AG04449 (cell line): ENCODE measurements at regions of chr11 and their contacts with region 1.

Region 1: DNA sequence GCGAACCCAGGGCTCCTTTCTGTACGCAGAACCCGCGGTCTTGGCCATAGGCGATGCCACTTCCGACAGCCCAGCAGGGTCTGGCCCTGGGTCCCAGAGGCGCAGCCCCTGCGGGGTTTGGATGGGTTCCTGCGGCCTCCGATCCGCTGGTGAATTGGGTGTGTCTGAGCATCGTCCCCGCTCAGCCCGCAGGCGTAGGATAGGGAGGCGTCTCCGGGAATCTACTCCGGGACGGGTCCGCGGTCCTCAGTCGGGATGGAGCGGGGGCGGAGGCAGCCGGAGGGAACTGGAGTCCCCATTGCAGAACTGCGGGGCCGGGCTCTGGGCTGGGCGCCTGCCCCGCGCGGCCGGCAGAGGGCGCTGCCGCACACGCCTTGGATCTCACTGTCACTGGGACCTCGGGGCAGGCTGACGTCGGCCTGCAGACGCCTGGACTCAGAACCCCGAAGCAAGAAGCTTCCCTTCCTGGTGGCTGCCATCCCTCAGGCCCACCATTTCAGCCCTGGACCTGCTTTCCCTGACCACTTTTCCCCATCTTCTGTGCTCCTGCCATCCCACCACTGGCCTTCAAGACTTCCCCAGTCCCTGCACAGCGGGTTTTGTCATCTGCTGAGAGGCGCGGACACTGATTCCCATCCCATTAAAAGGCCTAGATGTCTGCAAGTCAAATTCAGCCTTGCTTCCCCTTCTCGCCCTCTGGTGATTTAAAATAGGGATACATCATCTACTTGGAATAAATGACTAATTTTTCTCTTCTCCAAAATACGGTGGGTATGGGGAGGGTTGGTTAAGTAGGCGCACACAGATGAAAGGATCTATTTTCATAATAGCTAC is 38.3 kb upstream of the CREB3L1 start:
- DNase-seq: no peak
- H3K4me3 ChIP-seq: peak overlapping the region; percentile 53
- CTCF ChIP-seq: peak; percentile 90

Region 2: GRCh38 chr11:46278387-46279125 is 39.4 kb after region 1 on chr11:
- CTCF ChIA-PET with region 1: interaction called, 72 read pairs
- POLR2A ChIA-PET with region 1: interaction called, 40 read pairs
- DNase-seq: no peak
- H3K4me3 ChIP-seq: peak overlapping the region; percentile 95
- CTCF ChIP-seq: peak; percentile 90

Region 3: GRCh38 chr11:46308631-46309419 is 69.6 kb after region 1 on chr11:
- CTCF ChIA-PET with region 1: interaction called, 661 read pairs
- POLR2A ChIA-PET with region 1: interaction called, 4 read pairs
- DNase-seq: no peak
- H3K4me3 ChIP-seq: no peak overlapping the region
- CTCF ChIP-seq: peak; percentile 86

Region 4: DNA sequence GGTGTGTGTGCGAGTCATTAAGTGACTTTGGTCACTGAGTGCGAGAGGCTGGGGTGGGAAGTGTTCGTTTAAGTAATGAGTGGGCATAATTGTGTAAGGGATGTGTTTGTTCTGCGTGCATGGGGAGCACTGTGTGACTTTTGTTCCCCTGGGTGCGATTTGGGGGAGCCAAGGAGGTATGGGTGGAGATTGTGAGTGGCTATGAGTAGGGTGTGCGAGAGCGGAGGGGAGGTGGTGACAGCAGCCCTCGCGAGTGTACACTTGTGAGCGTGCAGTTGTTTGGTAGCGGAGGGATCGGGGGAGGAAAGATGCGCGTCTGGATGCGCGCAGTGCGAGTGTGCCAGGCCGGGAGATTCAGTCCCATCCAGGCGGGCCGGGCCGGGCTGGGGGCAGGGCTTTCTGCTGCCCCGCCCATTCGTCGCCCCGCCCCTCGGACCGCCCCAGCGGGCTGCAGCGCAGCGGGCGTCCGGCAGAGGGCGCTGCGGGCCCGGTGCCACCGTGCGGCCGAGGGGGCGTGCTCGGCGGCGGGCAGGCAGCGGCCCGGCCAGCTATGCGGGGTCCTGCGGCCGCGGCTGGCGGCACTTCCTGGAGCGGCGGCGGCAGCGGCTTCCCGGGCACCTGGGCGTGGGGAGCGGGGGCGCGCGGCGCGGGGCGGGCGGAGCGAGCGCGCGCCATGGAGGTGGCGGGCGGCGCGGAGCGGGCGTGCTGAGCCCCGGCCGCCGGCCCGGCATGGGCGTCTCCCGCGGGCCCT is 107.9 kb after region 1 on chr11 and contains the start of gene DGKZ:
- CTCF ChIA-PET with region 1: interaction called, 52 read pairs
- POLR2A ChIA-PET with region 1: no interaction called
- DNase-seq: no peak
- H3K4me3 ChIP-seq: peak within 1 kb of the TSS; percentile 90
- CTCF ChIP-seq: peak; percentile 62

Region 5: DNA sequence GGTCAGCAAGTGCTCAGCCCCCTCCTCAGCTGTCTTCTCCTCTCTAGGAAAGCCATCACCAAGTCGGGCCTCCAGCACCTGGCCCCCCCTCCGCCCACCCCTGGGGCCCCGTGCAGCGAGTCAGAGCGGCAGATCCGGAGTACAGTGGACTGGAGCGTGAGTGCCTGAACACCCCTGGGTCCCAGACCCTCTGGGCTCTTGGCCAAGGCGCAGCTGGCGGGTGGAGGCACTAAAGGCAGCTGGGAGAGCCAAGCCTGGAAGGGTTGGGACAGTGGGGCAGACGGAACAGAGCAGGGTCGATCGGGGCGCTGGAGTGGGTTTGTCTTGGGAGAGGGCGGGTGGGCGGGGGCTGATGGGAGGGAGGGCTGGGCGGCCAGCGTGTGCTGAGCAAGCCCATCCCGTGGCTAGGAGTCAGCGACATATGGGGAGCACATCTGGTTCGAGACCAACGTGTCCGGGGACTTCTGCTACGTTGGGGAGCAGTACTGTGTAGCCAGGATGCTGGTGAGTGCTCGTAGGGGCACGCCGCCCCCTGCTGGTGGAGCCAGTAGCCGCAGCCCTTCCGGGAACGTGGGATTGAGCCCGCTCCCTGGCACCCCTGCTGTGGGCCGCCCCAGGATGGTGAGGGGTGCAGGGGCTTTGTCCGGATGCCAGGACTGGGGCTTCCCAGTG is 128.2 kb after region 1 on chr11:
- CTCF ChIA-PET with region 1: interaction called, 36 read pairs
- POLR2A ChIA-PET with region 1: no interaction called
- DNase-seq: no peak
- H3K4me3 ChIP-seq: no peak overlapping the region
- CTCF ChIP-seq: peak; percentile 89

Region 6: DNA sequence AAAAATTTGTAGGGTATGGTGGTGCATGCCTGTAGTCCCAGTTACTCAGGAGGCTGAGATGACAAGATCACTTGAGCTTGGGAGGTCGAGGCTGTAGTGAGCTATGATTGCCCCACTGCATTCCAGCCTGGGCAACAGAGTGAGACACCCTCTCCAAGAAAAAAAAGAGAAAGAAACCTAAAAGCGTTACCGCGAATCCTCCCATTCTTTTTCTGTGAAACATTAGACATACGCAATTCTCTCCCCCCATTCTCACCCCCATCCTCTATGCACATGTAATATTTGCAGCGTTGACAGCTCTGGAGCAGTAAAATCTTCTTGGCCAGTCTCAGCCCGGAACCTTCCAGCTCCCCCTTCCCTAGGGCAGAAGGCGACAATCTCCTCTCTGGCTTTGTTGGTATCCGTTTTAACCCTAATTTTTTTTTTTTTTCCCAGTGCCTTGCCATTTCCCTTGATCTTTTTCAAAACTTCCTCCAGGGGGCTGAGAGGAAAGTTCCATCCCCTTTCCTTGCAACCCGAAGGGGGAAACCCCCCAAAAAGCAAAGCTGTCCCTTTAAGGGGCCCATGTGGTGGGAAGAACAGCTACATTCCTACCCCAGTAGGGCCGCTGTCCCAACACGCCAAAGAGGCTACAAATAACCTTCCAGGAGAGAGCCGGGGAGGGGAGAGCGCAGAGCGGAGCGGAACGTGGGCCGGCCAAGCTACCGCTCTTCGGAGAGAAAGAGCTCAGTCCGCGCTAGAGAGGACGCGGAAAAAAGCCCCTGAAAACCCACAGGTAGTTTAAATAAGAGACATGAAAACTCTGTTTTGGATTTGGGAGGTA is 677.3 kb after region 1 on chr11:
- CTCF ChIA-PET with region 1: no interaction called
- POLR2A ChIA-PET with region 1: no interaction called
- DNase-seq: no peak
- H3K4me3 ChIP-seq: peak overlapping the region; percentile 64
- CTCF ChIP-seq: peak; percentile 5